Activated CD4-positive, alpha-beta memory T cell treated with anti-CD3 and anti-CD28 coated beads, Interleukin-2, amount 10 ng/mL, durations not matched to agents 7 days and 5 days (primary cell): ENCODE measurements at regions of chr1 and their contacts with region 1.

Region 1: DNA sequence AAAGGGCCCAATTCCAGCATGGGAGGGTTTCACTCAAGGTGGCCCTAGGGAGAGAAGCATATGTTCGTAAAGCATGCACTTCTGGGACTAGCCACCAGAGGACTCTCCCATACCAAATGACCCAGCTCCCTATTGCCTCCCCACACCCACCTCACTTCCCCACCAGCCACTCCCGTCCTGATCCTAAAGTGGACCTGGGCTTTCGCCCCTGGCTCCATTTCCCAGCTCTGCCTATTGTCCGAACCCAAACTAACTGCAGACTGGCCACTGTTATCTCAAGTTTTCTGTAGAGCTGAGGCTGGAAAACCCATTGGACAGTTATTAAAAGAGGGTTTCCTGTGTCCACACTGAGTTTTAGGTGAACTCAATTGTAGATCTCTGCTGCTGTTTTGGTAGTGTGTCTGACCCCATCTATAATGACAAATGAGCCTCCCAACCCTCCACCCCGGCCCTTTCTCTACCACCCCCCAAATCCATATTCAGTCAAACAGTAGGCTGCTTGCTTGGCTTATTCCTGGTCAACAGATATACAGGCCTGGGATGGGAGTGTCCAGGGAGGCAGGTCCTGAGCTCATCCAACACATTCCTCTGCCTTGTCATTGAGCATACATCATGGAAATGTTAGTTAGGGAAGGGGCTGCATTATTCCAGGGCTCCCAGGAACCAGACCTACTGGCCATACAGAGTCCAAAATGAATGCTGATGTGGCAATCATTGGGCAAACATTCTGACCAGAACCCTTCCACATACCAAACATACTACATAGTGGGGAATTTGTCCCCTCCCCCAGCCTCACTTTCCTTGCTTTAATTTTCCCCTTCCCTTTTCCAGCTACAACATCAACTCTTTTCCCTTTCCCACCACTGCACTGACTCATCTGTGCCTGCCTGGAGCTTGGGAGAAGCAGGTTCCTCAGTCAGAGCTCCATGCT is 59.2 kb downstream of the ABCA4 start:
- DNase-seq: peak; percentile 37
- H3K4me3 Mint-ChIP-seq: no peak overlapping the region
- H3K27ac Mint-ChIP-seq: no peak overlapping the region
- H3K4me1 Mint-ChIP-seq: no peaks in the 10 kb centered on the region
- H3K27me3 Mint-ChIP-seq: peaks cover 25% of the 10 kb centered on the region

Region 2: GRCh38 chr1:94335950-94336349 is 274.2 kb after region 1 on chr1:
- CTCF ChIA-PET with region 1: interaction called, 44 read pairs
- POLR2A ChIA-PET with region 1: no interaction called
- DNase-seq: no peak
- H3K4me3 Mint-ChIP-seq: no peak overlapping the region
- H3K27ac Mint-ChIP-seq: no peak overlapping the region
- H3K4me1 Mint-ChIP-seq: no peaks in the 10 kb centered on the region
- H3K27me3 Mint-ChIP-seq: peaks cover 12% of the 10 kb centered on the region

Region 3: GRCh38 chr1:94463765-94464330 is 402.1 kb after region 1 on chr1:
- CTCF ChIA-PET with region 1: interaction called, 21 read pairs
- POLR2A ChIA-PET with region 1: no interaction called
- DNase-seq: no peak
- H3K4me3 Mint-ChIP-seq: no peak overlapping the region
- H3K27ac Mint-ChIP-seq: no peak overlapping the region
- H3K4me1 Mint-ChIP-seq: no peaks in the 10 kb centered on the region
- H3K27me3 Mint-ChIP-seq: no peaks in the 10 kb centered on the region